Colonic mucosa (tissue), 4 donors: ENCODE measurements at regions of chr3 and their contacts with region 1.

Region 1: GRCh38 chr3:25621087-25621486 is 43.6 kb downstream of the TOP2B start:
- DNase-seq: no peak
- H3K4me3 ChIP-seq: no peak overlapping the region
- H3K27ac ChIP-seq: no peak overlapping the region
- H3K4me1 ChIP-seq: no peaks in the 10 kb centered on the region
- H3K27me3 ChIP-seq: no peaks in the 10 kb centered on the region
- CTCF ChIP-seq: no peak

Region 2: GRCh38 chr3:25751725-25752124 is 130.6 kb after region 1 on chr3:
- intact Hi-C with region 1: loop called (anchors 10 kb)
- DNase-seq: no peak
- H3K4me3 ChIP-seq: no peak overlapping the region
- H3K27ac ChIP-seq: no peak overlapping the region
- H3K4me1 ChIP-seq: no peaks in the 10 kb centered on the region
- H3K27me3 ChIP-seq: no peaks in the 10 kb centered on the region
- CTCF ChIP-seq: no peak